PC-3 (cell line): ENCODE measurements at regions of chr7 and their contacts with region 1.

Region 1: GRCh38 chr7:22559829-22560489 is 60.0 kb upstream of the STEAP1B start:
- DNase-seq: peak; percentile 86
- ATAC-seq: peak; percentile 55
- H3K4me3 ChIP-seq: no peak overlapping the region
- H3K27ac ChIP-seq: peak overlapping the region; percentile 95
- H3K4me1 ChIP-seq: peaks cover 49% of the 10 kb centered on the region
- H3K27me3 ChIP-seq: no peaks in the 10 kb centered on the region
- CTCF ChIP-seq: peak; percentile 95

Region 2: DNA sequence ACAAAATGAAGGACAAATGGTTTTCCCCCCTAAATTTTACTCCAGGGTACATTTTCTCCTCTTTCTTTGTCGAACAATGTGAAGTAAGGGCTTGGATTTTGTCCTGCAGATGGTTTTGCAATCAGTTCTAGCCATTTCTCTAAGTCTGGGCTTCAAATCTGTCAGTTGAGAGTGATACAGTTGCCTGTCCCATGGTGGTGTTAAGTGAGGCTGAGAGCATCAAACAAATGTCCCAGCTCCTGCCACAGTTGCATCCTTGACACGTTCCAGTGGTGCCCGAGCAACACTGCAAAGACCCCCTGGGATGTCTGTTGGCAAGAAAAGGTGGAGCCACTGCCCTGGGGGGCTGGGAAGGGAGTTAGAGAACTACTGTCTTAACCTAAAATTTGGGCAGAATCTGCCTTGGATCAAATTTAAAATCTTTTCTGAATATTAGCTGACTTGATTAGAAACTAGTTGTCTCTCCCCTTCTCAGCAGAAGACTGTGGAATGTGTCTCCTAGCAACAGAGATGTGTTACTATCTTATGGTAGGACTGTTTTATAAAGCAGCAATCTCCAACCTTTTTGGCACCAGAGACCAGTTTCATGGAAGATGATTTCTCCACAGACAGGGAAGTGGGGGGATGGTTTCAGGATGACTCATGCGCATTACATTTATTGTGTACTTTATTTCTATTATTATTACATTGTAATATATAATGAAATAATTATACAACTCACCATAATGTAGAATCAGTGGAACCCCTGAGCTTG is 42.0 kb after region 1 on chr7:
- CTCF ChIA-PET with region 1: no interaction called
- POLR2A ChIA-PET with region 1: no interaction called
- intact Hi-C with region 1: loop called (anchors 5 kb)
- DNase-seq: peak; percentile 48
- ATAC-seq: peak; percentile 35
- H3K4me3 ChIP-seq: no peak overlapping the region
- H3K27ac ChIP-seq: no peak overlapping the region
- H3K4me1 ChIP-seq: peaks cover 20% of the 10 kb centered on the region
- H3K27me3 ChIP-seq: no peaks in the 10 kb centered on the region
- CTCF ChIP-seq: no peak

Region 3: GRCh38 chr7:22672846-22673652 is 113.1 kb after region 1 on chr7:
- CTCF ChIA-PET with region 1: interaction called, 5 read pairs
- POLR2A ChIA-PET with region 1: interaction called, 8 read pairs
- intact Hi-C with region 1: loop called (anchors 1 kb)
- DNase-seq: peak; percentile 96
- ATAC-seq: peak; percentile 97
- H3K4me3 ChIP-seq: no peak overlapping the region
- H3K27ac ChIP-seq: peak overlapping the region; percentile 96
- H3K4me1 ChIP-seq: peaks cover 63% of the 10 kb centered on the region
- H3K27me3 ChIP-seq: no peaks in the 10 kb centered on the region
- CTCF ChIP-seq: no peak

Region 4: GRCh38 chr7:22782616-22783232 is 222.8 kb after region 1 on chr7:
- CTCF ChIA-PET with region 1: interaction called, 5 read pairs
- POLR2A ChIA-PET with region 1: no interaction called
- intact Hi-C with region 1: loop called (anchors 2 kb)
- DNase-seq: peak; percentile 73
- ATAC-seq: peak; percentile 95
- H3K4me3 ChIP-seq: no peak overlapping the region
- H3K27ac ChIP-seq: no peak overlapping the region
- H3K4me1 ChIP-seq: no peaks in the 10 kb centered on the region
- H3K27me3 ChIP-seq: no peaks in the 10 kb centered on the region
- CTCF ChIP-seq: peak; percentile 89

Region 5: DNA sequence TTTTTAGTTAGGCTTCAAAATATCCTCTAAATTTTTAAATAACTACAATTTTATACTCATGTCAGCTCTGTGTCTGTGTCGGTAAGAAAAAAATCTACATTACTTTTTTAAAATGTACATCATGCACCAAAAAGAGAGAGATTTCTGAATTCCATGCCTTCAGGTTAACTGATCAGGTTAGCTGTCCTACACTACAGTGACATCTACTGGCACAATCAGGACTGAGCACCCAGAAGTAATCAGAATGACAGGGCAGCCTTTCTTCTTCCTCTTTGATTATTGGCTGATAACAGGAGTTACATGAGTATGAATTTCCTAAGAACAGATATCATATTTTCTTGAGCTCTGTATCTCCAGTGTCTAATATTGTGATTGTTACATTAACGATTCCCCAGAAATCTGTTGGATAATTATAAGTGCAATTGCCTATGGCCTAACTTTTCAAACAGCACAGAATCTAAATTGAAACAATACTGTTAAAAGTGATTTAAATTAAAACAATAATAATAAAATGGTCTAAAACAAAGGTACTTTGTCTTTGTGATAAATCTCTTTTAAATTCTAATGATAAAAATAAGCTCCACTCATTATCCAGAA is 495.7 kb after region 1 on chr7:
- CTCF ChIA-PET with region 1: no interaction called
- POLR2A ChIA-PET with region 1: no interaction called
- intact Hi-C with region 1: loop called (anchors 2 kb)
- DNase-seq: peak; percentile 81
- ATAC-seq: peak; percentile 93
- H3K4me3 ChIP-seq: no peak overlapping the region
- H3K27ac ChIP-seq: no peak overlapping the region
- H3K4me1 ChIP-seq: no peaks in the 10 kb centered on the region
- H3K27me3 ChIP-seq: no peaks in the 10 kb centered on the region
- CTCF ChIP-seq: peak; percentile 95

Region 6: DNA sequence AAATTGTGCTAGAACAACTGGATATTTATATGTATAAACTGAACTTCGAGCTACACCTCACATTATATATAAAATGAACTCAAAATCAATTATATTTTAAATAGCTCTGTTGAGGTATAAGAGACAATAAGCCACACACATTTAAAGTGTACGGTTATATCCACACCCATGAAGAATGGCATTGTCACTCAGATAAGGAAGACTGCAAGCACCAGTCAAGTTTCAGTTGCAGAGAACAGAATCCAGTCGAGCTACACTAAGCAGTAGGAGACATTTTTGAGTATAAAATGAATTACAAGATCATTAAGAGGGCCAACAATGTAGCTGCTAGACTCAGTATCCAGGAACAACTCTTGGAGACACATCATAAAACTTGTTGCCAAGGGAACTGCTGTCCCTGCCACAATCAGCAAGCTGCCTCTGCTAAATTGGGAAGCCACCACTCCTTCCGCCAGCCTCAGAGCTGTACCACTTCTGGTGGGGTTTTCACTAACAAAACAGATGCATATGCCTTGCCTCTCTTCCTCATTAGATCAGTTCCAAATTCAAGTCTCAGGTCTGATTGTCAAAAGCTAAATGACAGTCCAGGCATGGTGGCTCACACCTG is 667.0 kb after region 1 on chr7:
- CTCF ChIA-PET with region 1: no interaction called
- POLR2A ChIA-PET with region 1: no interaction called
- intact Hi-C with region 1: no loop called
- DNase-seq: no peak
- ATAC-seq: no peak
- H3K4me3 ChIP-seq: no peak overlapping the region
- H3K27ac ChIP-seq: no peak overlapping the region
- H3K4me1 ChIP-seq: no peaks in the 10 kb centered on the region
- H3K27me3 ChIP-seq: no peaks in the 10 kb centered on the region
- CTCF ChIP-seq: no peak